ENCODE measurements at regions of chr6 and their contacts with region 1.

Region 1: GRCh38 chr6:164749221-164750064 is 560.0 kb downstream of the C6orf118 start:
- DNase-seq: peak in 7 of 10 donors; percentile 32 to 74 (median 47)
- H3K4me3 ChIP-seq: peak overlapping the region in 21 of 59 donors; percentile 2 to 48 (median 16)
- H3K27ac ChIP-seq: peak overlapping the region in 41 of 59 donors; percentile 2 to 76 (median 43)
- H3K27me3 ChIP-seq: no peaks in the 10 kb centered on the region
- CTCF ChIP-seq: no peak

Region 2: GRCh38 chr6:164273491-164273890 is 476.0 kb before region 1 on chr6:
- intact Hi-C with region 1: no loop called
- DNase-seq: no peak
- H3K4me3 ChIP-seq: no peak overlapping the region
- H3K27ac ChIP-seq: no peak overlapping the region
- H3K27me3 ChIP-seq: peaks cover 0 to 2% (median 0%) of the 10 kb centered on the region in 45 donors
- CTCF ChIP-seq: no peak

Region 3: DNA sequence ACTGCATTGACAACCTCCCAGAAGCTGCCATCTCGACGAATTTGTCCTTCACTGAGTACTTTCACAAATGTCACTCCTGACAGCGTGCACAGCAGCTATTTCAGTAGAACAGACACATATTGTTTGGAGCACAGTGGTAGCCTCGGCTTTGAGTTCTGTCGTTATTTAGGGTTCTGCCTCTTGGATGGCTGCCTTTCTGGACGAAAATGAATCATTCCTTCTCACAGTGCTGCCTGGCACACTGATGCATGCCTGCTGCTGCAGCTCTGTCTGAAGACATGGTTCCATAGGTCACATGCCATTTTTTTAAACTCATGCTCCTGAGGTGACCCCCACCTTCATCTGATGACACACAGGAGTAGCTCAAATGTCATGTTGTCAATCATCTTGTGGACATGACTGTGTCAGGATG is 83.0 kb after region 1 on chr6:
- intact Hi-C with region 1: loop called in 1 of 2 experiments (anchors 10 kb)
- DNase-seq: peak in 5 of 10 donors; percentile 27 to 66 (median 53)
- H3K4me3 ChIP-seq: peak overlapping the region in 3 of 59 donors; percentile 26 to 37 (median 30)
- H3K27ac ChIP-seq: peak overlapping the region in 44 of 59 donors; percentile 1 to 84 (median 50)
- H3K27me3 ChIP-seq: no peaks in the 10 kb centered on the region
- CTCF ChIP-seq: peak in 2 of 56 donors; percentile 9 to 43

Measured in dorsolateral prefrontal cortex (tissue), 120 donors.